ENCODE measurements at regions of chr6 and their contacts with region 1.

Region 1: GRCh38 chr6:159125014-159125609 is 44.1 kb upstream of the FNDC1 start:
- DNase-seq: peak in 2 of 3 donors; percentile 42 to 49
- H3K4me3 ChIP-seq: no peak overlapping the region
- H3K27ac ChIP-seq: no peak overlapping the region
- H3K4me1 ChIP-seq: peaks cover 0 to 2% (median 1%) of the 10 kb centered on the region in 4 experiments
- H3K27me3 ChIP-seq: no peaks in the 10 kb centered on the region

Region 2: DNA sequence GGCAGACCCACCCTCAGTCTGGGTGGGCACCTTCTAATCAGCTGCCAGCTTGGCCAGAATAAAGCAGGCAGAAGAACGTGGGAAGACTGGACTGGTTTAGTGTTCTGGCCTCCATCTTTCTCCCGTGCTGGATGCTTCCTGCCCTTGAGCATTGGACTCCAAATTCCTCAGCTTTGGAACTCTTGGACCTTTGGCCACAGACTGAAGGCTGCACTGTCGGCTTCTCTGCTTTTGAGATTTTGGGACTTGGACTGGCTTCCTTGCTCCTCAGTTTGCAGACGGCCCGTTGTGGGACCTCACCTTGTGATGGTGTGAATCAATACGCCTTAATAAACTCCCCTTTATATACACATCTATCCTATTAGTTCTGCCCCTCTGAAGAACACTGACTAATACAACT is 23.5 kb after region 1 on chr6:
- CTCF ChIA-PET with region 1: interaction called, 13 read pairs
- POLR2A ChIA-PET with region 1: no interaction called
- DNase-seq: no peak
- H3K4me3 ChIP-seq: no peak overlapping the region
- H3K27ac ChIP-seq: no peak overlapping the region
- H3K4me1 ChIP-seq: peaks cover 0 to 8% (median 0%) of the 10 kb centered on the region in 4 experiments
- H3K27me3 ChIP-seq: no peaks in the 10 kb centered on the region

Measured in common myeloid progenitor, CD34-positive (primary cell).